GM10248 (cell line): ENCODE measurements at regions of chr10 and their contacts with region 1.

Region 1: GRCh38 chr10:34845070-34845469 is 30.0 kb upstream of the PARD3 start:
- DNase-seq: no peak
- CTCF ChIP-seq: no peak

Region 2: DNA sequence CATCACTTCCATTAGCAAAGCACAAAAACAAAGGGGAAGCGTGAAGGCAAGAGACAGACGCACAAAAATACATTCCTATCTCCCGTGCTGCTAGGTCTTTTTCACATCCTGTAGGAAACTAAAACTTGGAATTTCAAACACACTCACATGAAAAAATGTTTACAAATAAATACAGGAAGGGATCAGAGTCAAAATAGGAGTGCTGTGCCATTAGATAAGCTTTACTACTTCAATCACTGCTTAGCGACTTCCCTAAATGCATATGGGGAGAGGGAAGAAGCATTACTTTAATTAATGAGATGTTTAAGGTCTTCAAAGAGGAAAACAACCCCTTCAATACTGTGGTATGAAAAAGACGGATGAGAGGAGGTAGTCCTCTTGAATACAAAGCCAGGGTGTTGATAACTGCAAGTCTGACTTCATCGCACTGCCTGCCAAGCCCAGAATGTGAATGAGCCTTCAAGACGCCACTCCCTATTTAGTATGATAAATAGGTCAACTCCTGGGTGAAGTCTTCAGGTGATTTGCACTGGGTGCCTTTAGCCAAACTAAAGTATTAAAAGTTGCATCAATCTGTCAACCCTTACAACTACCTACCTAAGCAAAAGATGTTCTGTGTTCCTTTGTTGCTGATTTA is 43.9 kb before region 1 on chr10:
- CTCF ChIA-PET with region 1: no interaction called
- POLR2A ChIA-PET with region 1: no interaction called
- DNase-seq: no peak
- CTCF ChIP-seq: no peak

Region 3: DNA sequence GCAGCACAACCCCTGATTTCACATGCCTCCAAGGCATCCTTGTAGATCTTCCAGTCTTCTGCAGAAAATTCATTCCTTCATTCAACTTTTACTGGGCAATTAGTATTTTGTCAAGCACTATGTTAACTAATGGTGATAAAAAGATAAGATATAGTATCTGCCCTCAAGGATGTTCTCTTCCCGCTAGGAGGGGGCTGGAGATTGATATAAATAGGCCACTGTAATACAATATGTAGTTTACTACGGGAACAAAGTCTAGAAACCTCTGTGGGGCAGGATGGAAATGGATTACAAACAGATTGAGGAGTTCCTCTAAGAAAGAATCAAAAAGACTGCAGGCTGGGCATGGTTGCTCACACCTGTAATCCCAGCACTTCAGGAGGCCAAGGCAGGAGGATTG is 19.7 kb before region 1 on chr10:
- CTCF ChIA-PET with region 1: interaction called, 3 read pairs
- POLR2A ChIA-PET with region 1: interaction called, 11 read pairs
- DNase-seq: no peak
- CTCF ChIP-seq: no peak

Region 4: DNA sequence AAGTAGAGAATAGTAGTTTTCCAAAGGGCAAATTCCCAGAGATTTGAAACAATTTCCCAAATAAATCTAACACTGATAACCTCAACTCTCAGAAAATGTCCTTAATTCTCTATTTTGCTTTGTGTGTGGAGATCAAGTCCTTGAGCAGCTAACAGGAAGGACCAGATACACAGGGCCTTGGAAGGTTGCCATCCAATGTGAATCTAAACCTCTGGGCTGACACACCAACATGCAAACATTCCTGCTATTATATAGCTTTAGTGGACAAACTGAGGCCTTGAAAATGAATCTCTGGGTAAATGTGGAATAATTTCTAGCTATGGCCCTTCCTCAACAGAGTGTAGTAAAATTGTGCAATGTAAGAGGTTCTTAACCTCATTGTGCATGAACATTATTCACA is 14.1 kb after region 1 on chr10:
- CTCF ChIA-PET with region 1: no interaction called
- POLR2A ChIA-PET with region 1: no interaction called
- DNase-seq: no peak
- CTCF ChIP-seq: no peak